Activated CD8-positive, alpha-beta T cell treated with anti-CD3 and anti-CD28 coated beads for 36 hours (primary cell): ENCODE measurements at regions of chr2 and their contacts with region 1.

Region 1: GRCh38 chr2:222690564-222691200 is 19.2 kb downstream of the MOGAT1 start:
- DNase-seq: peak; percentile 88
- ATAC-seq: peak; percentile 97
- H3K4me3 Mint-ChIP-seq: no peak overlapping the region
- H3K27ac Mint-ChIP-seq: no peak overlapping the region
- H3K4me1 Mint-ChIP-seq: peaks cover 7% of the 10 kb centered on the region
- H3K27me3 Mint-ChIP-seq: peaks cover 1% of the 10 kb centered on the region
- CTCF ChIP-seq: peak; percentile 99

Region 2: DNA sequence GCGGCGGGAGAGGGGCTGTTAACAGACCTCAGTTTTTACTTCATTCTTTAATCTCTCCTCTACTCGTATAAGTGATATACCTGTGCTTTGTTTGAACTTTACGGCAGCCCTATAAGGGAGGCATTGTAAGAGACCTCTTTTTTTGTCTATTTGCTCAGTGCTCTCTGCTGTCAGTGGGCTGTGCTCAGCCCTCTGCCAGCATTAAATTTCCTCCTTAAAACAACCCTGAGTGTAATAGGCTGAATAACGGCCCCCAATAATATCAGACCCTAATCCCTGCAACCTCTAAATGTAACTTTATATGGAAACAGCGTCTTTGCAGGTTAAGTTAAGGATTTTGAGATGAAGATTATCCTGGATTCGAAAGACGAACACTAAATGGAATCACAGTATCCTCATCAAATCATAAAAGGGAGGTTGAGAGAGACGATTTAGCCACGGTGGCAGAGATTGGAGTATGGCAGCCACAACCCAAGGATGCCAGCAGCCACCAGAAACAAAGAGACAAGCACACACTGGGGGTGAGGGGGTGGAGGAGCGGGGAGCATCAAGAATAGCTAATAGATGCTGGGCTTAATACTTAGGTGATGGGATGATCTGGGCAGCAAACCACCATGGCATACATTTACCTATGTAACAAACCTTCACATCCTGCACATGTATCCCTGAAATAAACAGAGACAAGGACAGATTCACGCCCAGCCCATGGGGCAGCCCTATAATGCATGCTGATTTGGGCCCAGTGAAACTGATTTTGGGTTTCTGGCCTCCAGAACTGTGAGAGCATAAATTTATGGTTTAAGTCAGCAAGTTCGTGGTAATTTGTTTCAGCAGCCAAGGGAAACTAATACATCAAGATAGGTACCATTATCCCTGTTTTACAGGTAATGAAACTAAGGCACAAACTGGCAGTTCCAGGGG is 33.9 kb before region 1 on chr2:
- CTCF ChIA-PET with region 1: interaction called, 14 read pairs
- POLR2A ChIA-PET with region 1: no interaction called
- intact Hi-C with region 1: no loop called
- DNase-seq: peak; percentile 31
- ATAC-seq: peak; percentile 17
- H3K4me3 Mint-ChIP-seq: peak overlapping the region; percentile 98
- H3K27ac Mint-ChIP-seq: peak overlapping the region; percentile 99
- H3K4me1 Mint-ChIP-seq: peaks cover 31% of the 10 kb centered on the region
- H3K27me3 Mint-ChIP-seq: no peaks in the 10 kb centered on the region
- CTCF ChIP-seq: no peak

Region 3: GRCh38 chr2:222677981-222678380 is 12.7 kb before region 1 on chr2:
- CTCF ChIA-PET with region 1: interaction called, 32 read pairs
- POLR2A ChIA-PET with region 1: no interaction called
- intact Hi-C with region 1: no loop called
- DNase-seq: no peak
- ATAC-seq: no peak
- H3K4me3 Mint-ChIP-seq: no peak overlapping the region
- H3K27ac Mint-ChIP-seq: no peak overlapping the region
- H3K4me1 Mint-ChIP-seq: no peaks in the 10 kb centered on the region
- H3K27me3 Mint-ChIP-seq: peaks cover 30% of the 10 kb centered on the region
- CTCF ChIP-seq: no peak

Region 4: GRCh38 chr2:222701233-222701632 is 10.6 kb after region 1 on chr2:
- CTCF ChIA-PET with region 1: interaction called, 17 read pairs
- POLR2A ChIA-PET with region 1: no interaction called
- intact Hi-C with region 1: no loop called
- DNase-seq: no peak
- ATAC-seq: no peak
- H3K4me3 Mint-ChIP-seq: no peak overlapping the region
- H3K27ac Mint-ChIP-seq: no peak overlapping the region
- H3K4me1 Mint-ChIP-seq: peaks cover 11% of the 10 kb centered on the region
- H3K27me3 Mint-ChIP-seq: peaks cover 32% of the 10 kb centered on the region
- CTCF ChIP-seq: no peak

Region 5: DNA sequence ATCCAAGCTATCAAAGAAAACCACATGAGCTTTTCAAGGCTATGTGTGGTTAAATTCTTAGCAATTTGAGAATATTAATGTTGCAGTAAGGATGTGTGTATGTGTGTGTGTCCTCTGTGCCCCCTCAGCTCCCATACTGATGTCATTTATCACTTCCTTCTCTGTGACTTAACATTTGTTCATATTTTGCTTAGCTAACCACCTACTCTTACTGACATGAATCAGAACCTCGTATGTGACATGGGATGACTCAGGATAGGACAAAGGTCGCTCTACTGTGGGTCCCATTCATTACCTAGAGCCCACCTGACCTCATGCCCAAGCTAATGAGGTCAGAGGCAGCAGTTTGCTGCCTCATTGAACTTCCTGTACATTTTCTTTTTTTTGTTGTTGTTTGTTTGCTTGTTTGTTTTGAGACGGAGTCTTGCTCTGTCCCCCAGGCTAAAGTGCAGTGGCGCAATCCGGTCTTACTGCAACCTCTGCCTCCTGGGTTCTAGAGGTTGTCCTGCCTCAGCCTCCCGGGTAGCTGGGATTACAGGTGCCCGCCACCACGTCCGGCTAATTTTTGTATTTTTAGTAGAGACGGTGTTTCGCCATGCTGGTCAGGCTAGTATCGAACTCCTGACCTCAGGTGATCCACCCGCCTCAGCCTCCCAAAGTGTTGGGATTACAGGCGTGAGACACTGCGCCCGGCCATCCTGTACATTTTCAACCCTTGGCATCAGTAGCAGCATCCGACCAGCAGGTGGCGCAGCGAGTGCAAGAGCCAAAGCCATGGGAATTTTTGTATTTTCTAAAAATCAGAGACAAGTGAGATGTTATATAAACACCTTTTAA is 17.2 kb after region 1 on chr2:
- CTCF ChIA-PET with region 1: interaction called, 12 read pairs
- POLR2A ChIA-PET with region 1: no interaction called
- intact Hi-C with region 1: no loop called
- DNase-seq: peak; percentile 88
- ATAC-seq: peak; percentile 93
- H3K4me3 Mint-ChIP-seq: no peak overlapping the region
- H3K27ac Mint-ChIP-seq: no peak overlapping the region
- H3K4me1 Mint-ChIP-seq: peaks cover 6% of the 10 kb centered on the region
- H3K27me3 Mint-ChIP-seq: peaks cover 15% of the 10 kb centered on the region
- CTCF ChIP-seq: peak; percentile 95

Region 6: DNA sequence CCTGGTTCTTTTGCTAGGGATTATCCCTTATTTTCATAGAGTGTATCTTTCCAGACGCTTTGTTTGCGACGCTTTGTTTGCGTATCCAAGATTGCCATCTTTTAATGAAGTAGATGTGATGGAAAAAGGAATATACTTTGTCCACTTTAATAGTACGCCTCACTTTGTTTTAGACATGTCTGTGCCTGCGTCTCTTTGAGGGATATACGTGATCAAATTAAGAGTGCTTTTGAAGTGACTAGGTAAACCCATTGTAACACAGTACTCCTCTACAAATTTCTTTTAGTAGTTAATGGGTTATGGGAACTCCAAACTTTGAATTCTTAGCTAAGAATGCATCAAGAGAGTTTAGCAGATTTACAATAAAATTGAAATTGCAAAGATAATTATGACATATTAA is 198.0 kb after region 1 on chr2:
- CTCF ChIA-PET with region 1: no interaction called
- POLR2A ChIA-PET with region 1: no interaction called
- intact Hi-C with region 1: no loop called
- DNase-seq: no peak
- ATAC-seq: no peak
- H3K4me3 Mint-ChIP-seq: no peak overlapping the region
- H3K27ac Mint-ChIP-seq: no peak overlapping the region
- H3K4me1 Mint-ChIP-seq: peaks cover 46% of the 10 kb centered on the region
- H3K27me3 Mint-ChIP-seq: no peaks in the 10 kb centered on the region
- CTCF ChIP-seq: no peak

Region 7: GRCh38 chr2:222903234-222904220 is 212.8 kb after region 1 on chr2:
- CTCF ChIA-PET with region 1: interaction called, 23 read pairs
- POLR2A ChIA-PET with region 1: no interaction called
- intact Hi-C with region 1: no loop called
- DNase-seq: peak; percentile 61
- ATAC-seq: peak; percentile 80
- H3K4me3 Mint-ChIP-seq: no peak overlapping the region
- H3K27ac Mint-ChIP-seq: no peak overlapping the region
- H3K4me1 Mint-ChIP-seq: peaks cover 25% of the 10 kb centered on the region
- H3K27me3 Mint-ChIP-seq: no peaks in the 10 kb centered on the region
- CTCF ChIP-seq: peak; percentile 73

Region 8: DNA sequence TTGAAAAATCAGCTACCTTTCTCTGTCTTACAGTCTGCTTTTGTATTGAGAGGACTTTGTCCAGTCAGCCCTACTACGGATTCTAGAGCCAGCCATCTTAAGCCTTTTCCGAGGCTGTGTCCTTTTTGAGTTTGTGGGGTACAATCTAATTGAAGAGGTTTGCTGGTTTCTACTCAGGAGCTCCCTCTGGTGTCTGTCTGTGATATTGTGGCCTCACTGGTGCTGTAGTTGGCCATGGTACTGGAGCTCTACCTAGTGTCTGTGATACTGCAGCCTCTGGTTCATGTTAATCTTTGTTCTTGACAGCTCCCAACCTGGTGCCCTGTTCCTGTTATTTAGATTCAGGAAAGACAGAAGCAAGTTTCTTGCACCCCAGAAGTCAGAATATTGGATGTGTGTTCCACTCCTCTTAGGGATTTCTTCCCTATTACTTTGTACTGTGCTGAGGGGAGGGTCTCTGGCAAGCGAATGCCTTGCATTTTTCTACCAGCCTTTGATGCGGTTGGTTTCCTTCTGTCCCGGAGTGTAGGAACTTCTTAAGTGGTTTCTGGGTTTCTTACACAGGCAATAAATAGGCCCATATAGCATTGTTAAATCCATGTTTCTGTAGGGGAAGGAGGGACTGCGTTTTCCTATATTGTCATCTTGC is 248.7 kb after region 1 on chr2:
- CTCF ChIA-PET with region 1: interaction called, 16 read pairs
- POLR2A ChIA-PET with region 1: no interaction called
- intact Hi-C with region 1: no loop called
- DNase-seq: peak; percentile 80
- ATAC-seq: peak; percentile 94
- H3K4me3 Mint-ChIP-seq: no peak overlapping the region
- H3K27ac Mint-ChIP-seq: no peak overlapping the region
- H3K4me1 Mint-ChIP-seq: peaks cover 18% of the 10 kb centered on the region
- H3K27me3 Mint-ChIP-seq: no peaks in the 10 kb centered on the region
- CTCF ChIP-seq: peak; percentile 86